T-cell (primary cell): ENCODE measurements at regions of chr4 and their contacts with region 1.

Region 1: DNA sequence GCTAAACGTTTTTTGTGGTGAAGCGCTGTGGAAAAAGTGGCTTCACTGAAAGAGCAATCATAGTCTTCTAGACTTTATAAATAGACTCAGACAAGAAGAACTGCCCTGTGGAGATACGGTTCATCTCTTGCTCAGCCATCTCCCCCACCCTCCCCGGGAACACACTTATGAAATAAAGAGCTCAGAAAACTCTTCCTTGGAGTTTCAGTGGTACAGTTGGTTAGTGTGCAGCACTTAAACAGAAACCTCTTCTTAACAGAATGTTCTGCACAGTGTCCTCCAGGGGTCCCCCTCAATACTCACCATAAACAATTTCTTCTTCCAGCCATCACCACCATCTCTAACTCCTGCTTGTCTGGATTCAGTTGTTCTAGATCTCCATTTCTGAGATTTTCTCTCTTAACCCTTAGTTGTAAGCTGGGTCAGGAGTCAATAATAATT is 313.0 kb downstream of the ARHGAP10 start:
- DNase-seq: peak in 4 of 35 experiments; percentile 5 to 49 (median 10)
- ATAC-seq: peak; percentile 72 to 89 (median 82)
- H3K4me3 ChIP-seq: no peak overlapping the region
- H3K4me3 Mint-ChIP-seq: no peak overlapping the region
- H3K27ac ChIP-seq: no peak overlapping the region
- H3K27ac Mint-ChIP-seq: no peak overlapping the region
- H3K4me1 ChIP-seq: peaks cover 2 to 3% of the 10 kb centered on the region in 2 experiments
- H3K4me1 Mint-ChIP-seq: peaks cover 16 to 27% (median 26%) of the 10 kb centered on the region in 3 donors
- H3K27me3 ChIP-seq: no peaks in the 10 kb centered on the region
- H3K27me3 Mint-ChIP-seq: no peaks in the 10 kb centered on the region

Region 2: DNA sequence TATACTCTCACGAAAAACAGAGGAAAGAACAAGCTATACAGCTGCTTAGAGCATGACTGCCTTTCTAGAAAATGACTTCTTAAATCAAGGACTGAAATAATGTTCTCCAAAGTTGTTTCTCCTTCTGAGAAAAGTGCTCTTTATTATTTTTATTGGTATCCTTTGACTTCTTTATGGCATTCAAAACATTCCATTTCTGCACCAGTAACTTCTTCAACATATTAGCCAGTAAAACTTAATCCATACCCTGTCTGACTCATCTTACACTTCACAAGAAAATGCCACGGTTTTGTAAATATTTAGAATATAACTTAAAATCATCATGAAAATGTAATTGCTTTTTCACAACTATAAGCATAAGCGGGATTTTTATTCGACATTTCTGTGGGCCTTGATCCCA is 216.9 kb after region 1 on chr4:
- CTCF ChIA-PET with region 1: interaction called in 1 of 2 experiments, 15 read pairs
- POLR2A ChIA-PET with region 1: no interaction called
- DNase-seq: no peak
- ATAC-seq: no peak
- H3K4me3 ChIP-seq: no peak overlapping the region
- H3K4me3 Mint-ChIP-seq: no peak overlapping the region
- H3K27ac ChIP-seq: no peak overlapping the region
- H3K27ac Mint-ChIP-seq: no peak overlapping the region
- H3K4me1 ChIP-seq: no peaks in the 10 kb centered on the region
- H3K4me1 Mint-ChIP-seq: peaks cover 33 to 54% (median 38%) of the 10 kb centered on the region in 3 donors
- H3K27me3 ChIP-seq: no peaks in the 10 kb centered on the region
- H3K27me3 Mint-ChIP-seq: no peaks in the 10 kb centered on the region

Region 3: GRCh38 chr4:149311076-149311475 is 1266.1 kb after region 1 on chr4:
- CTCF ChIA-PET with region 1: no interaction called
- POLR2A ChIA-PET with region 1: no interaction called
- DNase-seq: no peak
- ATAC-seq: no peak
- H3K4me3 ChIP-seq: no peak overlapping the region
- H3K4me3 Mint-ChIP-seq: no peak overlapping the region
- H3K27ac ChIP-seq: no peak overlapping the region
- H3K27ac Mint-ChIP-seq: no peak overlapping the region
- H3K4me1 ChIP-seq: no peaks in the 10 kb centered on the region
- H3K4me1 Mint-ChIP-seq: no peaks in the 10 kb centered on the region
- H3K27me3 ChIP-seq: no peaks in the 10 kb centered on the region
- H3K27me3 Mint-ChIP-seq: no peaks in the 10 kb centered on the region